ENCODE measurements at regions of chr1 and their contacts with region 1.

Region 1: DNA sequence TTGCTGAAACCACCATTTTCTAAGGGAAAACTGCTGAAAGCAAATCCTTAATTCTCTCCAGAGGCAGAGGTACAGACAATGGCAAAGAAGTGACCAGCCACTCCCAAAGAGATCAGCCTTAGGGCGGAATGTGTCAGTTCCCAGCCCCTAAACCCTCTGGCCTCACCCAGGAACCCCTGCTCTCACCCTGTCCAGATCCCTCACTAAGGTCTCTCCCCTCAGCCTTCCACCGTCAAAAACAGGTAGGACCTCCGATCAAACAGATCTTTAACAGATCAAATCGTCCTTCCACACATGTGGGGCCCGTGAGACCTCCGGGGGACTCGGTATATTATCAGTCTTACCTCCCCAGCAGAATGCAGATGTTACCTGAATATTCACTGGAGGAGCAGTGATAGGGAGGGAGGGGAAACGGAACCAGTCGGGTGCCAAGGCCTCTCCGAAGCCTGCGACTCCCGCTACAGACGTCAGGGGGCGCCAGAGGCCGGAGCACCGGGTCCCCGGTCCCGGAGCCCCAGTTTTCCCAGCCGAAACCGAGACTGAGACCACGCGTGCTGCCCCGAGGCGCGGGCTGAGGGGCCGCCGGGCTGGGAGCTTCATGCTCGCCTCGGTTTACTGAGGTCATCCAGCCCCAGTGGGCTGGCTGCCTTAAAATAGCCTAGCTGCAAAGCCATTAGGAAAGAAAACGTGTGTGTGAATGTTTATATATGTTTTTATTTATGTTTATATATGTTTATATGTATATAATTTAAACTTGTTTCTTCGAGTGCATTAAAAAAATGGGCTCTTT is 23.6 kb downstream of the GPA33 start:
- DNase-seq: peak; percentile 90
- CTCF ChIP-seq: peak; percentile 94

Region 2: DNA sequence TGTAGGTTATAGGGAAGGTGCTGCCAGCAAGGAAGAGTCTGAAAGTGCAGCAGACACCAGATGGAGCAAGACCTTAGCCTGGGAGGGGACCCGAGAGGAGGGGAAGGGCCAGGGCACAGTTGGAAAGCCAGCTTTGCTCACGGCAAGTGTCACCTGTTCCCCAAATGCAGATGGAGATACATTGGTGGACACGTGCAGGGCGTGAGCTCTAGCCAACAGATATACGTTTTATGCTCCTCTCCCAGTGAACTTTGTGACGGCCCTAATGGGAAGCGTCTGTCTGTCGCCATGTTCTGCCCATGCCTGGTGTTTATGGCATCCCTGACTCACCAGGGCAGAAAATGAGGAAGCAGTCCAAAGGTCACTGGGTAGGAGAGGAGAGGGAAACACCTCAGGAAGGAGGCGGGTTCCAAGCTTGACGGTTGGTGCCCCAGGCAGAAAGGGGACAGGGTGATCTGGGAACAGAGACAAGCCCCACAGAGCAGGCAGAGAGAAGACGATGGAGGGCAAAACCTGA is 16.0 kb after region 1 on chr1:
- CTCF ChIA-PET with region 1: interaction called, 15 read pairs
- POLR2A ChIA-PET with region 1: no interaction called
- DNase-seq: no peak
- CTCF ChIP-seq: no peak

Region 3: DNA sequence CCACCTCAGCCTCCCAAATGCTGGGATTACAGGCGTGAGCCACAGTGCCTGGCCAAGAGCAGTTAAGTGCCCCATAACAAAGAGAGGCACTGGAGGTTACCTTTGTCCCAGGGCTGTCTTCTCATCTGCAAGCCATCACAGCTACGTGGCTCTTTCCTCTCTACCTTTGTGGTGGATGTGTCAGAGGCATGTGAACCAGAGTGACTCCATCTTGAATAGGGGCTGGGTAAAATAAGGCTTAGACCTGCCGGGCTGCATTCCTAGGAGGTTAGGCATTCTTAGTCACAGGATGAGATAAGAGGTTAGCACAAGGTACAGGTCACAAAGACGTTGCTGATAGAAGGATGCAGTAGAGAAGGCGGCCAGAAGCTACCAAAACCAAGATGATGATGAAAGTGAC is 94.7 kb after region 1 on chr1:
- CTCF ChIA-PET with region 1: no interaction called
- POLR2A ChIA-PET with region 1: no interaction called
- DNase-seq: no peak
- CTCF ChIP-seq: no peak

Measured in GM10248 (cell line).